A549 (cell line): ENCODE measurements at regions of chr5 and their contacts with region 1.

Region 1: GRCh38 chr5:177113566-177114424 is 19.8 kb upstream of the NSD1 start:
- DNase-seq: peak; percentile 74 to 94
- ATAC-seq: peak; percentile 75
- H3K4me3 ChIP-seq: no peak overlapping the region
- H3K27ac ChIP-seq: no peak overlapping the region
- H3K4me1 ChIP-seq: peaks cover 4% of the 10 kb centered on the region; the same call in 1 of the 3 replicates
- CTCF ChIP-seq: peak; percentile 97
- EP300 ChIP-seq: no peak
- POLR2A ChIP-seq: no peak
- RAD21 ChIP-seq: peak; percentile 95 to 99

Region 2: DNA sequence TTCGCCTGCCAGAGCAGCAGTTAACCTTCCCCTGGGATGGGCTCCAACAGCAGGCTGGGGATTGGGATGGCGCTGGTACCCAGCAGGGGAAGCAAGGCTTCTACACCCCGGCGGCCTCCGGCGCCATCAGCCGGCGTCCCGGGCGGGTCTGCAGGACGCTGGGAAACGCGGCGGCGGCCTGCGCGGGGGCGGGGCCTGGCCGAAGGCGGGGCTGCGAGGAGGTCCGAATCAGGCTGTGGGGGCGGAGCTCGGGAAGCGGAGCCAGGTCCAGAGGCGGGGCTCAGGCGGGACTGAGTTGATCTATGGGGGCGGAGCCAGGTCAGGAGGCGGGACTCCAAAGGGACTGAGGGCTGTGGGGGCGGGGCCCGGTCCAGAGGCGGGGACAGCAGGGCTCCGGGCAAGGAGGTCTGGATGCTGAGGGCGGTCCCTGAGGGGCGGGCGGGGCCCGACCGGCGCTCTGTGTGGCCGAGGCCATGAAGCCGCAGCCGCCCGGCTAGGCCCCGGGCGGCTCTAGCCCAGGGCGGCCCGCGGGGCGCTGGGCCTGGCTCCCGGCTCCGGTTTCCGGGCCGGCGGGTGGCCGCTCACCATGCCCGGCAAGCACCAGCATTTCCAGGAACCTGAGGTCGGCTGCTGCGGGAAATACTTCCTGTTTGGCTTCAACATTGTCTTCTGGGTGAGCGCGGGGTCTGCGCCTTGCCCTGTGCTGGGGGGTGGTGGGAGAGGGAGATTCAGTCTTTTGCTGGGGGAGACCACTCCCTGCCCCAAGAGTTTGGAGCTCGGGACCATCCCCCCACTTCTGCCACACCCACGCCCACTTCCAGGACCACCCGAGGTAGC is 466.5 kb before region 1 on chr5 and contains the start of gene TSPAN17:
- CTCF ChIA-PET with region 1: interaction called, 123 read pairs
- POLR2A ChIA-PET with region 1: no interaction called
- DNase-seq: peak; percentile 92 to 98
- ATAC-seq: peak; percentile 82 to 95
- H3K4me3 ChIP-seq: peak within 1 kb of the TSS; percentile 66
- H3K27ac ChIP-seq: peak within 1 kb of the TSS; percentile 86 to 94
- H3K4me1 ChIP-seq: peaks cover 14% of the 10 kb centered on the region
- CTCF ChIP-seq: peak; percentile 30; the same call in 2 of the 3 replicates
- EP300 ChIP-seq: no peak
- POLR2A ChIP-seq: peak; percentile 97
- RAD21 ChIP-seq: peak; percentile 32 to 66
- polyA plus RNA-seq, gene TSPAN17: 33.7 and 35.6 TPM in 2 replicates

Region 3: GRCh38 chr5:177094224-177095087 is 19.3 kb before region 1 on chr5:
- CTCF ChIA-PET with region 1: interaction called, 111 read pairs
- POLR2A ChIA-PET with region 1: interaction called, 3 read pairs
- DNase-seq: peak in 1 of 2 experiments; percentile 43
- ATAC-seq: peak; percentile 5 to 21; a peak in 2 of 6 replicates
- H3K4me3 ChIP-seq: no peak overlapping the region
- H3K27ac ChIP-seq: peak overlapping the region; percentile 39 to 65; a peak in 5 of 6 replicates
- H3K4me1 ChIP-seq: peaks cover 22% of the 10 kb centered on the region
- CTCF ChIP-seq: no peak
- EP300 ChIP-seq: no peak
- POLR2A ChIP-seq: no peak
- RAD21 ChIP-seq: no peak

Region 4: DNA sequence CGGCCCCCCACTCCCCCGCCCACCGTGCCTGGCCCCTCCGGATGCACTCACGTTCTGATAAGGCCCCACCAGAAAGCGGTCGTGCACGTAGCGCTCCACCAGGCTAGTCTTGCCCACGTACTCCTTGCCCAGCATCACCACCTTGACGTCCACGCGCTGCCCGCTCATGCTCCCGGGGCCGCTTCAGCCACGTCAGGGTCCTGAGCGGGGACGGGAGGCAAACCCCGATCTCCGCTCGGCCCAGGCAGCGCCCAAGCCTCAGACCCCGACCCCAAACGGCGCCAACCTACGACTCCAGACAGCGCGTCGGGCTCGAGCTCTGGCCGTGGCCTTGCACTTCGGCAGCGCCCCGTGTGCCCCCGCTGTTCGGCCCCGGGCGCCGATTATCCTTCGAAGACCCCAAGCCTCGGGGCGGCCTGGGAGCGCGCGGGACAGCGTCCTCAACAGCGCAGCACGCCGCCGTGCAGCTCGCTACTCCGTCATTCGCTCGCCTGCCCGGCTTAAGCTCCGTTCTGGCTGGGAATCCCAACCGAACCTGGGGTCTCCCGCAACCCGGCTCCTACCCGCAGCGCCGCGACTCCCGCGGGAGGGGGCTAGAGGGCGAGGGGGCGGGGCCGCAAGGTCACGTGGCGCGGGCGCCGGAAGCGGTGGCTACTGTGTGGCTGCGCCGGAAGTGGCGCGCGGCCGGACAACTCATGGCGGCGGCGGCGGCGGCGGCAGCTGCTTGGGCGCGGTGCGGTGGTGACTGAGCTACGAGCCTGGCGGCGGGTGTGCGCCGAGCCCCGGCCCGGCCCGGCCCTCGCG is 189.5 kb after region 1 on chr5 and contains the starts of genes PRELID1 and RAB24:
- CTCF ChIA-PET with region 1: interaction called, 31 read pairs
- POLR2A ChIA-PET with region 1: no interaction called
- DNase-seq: peak; percentile 77 to 84
- ATAC-seq: peak; percentile 55 to 78
- H3K4me3 ChIP-seq: peak within 1 kb of the TSS; percentile 68
- H3K27ac ChIP-seq: peak within 1 kb of the TSS; percentile 95 to 96
- H3K4me1 ChIP-seq: peaks cover 42% of the 10 kb centered on the region
- CTCF ChIP-seq: peak; percentile 14; the same call in 2 of the 3 replicates
- EP300 ChIP-seq: no peak
- POLR2A ChIP-seq: peak; percentile 60
- RAD21 ChIP-seq: no peak
- polyA plus RNA-seq, gene PRELID1: 218 and 227 TPM in 2 replicates
- polyA plus RNA-seq, gene RAB24: 31.2 and 31.3 TPM in 2 replicates

Region 5: DNA sequence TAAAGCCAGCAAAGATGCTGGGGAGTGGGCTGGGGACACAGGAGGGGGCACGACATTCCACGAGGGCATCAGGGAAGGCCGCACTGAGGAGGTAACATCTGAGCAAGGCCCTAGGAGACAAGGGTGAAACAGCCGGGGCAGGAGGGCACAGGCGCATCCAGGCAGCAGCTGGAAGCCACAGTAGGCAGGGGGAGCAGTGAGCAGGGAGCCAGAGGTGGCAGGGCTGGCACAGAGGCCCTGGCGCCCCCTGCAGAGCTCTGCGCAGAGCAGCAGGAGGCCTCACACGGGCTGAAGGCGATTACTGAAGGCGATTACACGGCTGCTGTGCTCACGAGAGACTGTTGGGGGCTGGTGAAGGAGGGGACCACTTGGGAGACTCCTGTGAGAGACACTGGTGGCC is 222.3 kb after region 1 on chr5:
- CTCF ChIA-PET with region 1: interaction called, 10 read pairs
- POLR2A ChIA-PET with region 1: no interaction called
- DNase-seq: peak; percentile 62 to 74
- ATAC-seq: peak; percentile 90 to 97
- H3K4me3 ChIP-seq: no peak overlapping the region
- H3K27ac ChIP-seq: no peak overlapping the region
- H3K4me1 ChIP-seq: 0 out of 3 replicates have a peak, but pooled peaks cover 10% of the 10 kb centered on the region
- CTCF ChIP-seq: peak; percentile 57
- EP300 ChIP-seq: no peak
- POLR2A ChIP-seq: no peak
- RAD21 ChIP-seq: peak; percentile 58 to 60

Region 6: DNA sequence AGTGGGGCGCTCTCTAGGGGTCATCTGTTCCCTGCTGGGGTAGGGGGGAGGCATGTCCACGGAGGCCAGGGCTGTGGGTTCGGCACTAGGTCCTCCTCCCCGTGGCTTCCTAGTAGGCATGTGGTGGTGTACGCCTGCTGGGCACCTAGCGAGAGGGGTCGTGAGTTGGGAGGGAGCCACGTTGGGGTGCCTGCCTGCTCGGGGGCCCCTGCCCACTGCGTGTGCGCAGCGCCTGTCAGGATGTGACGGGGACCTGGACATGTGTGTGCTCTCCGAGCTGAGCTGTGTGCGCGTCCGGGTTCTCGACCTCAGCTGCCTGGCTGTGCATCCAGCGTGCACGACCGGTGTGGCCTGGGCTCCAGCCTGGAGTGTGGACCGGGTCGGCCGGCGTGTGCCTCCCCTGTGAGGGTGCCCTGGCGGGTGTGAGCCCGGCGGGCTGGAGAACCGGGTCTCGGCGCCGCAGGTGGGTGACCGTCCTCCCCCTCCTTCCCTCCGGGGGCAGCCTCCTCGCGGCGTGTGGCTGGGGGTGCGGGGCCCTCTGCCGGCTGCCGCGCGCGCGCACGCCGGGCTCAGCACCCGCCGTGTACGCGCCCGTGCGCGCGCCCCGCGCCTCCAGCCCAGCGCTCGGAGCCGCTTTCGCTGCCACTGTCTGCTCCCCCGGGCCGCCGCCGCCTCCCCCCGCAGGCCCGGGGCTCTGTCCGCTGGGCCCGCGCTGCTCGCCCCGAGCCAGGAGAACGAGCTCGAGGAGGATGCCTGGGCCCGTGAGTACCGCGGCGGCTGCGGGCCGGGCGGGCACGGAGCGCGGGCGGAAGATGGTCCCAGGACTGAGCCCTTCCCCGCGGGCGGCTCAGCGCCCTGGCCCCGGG is 332.6 kb after region 1 on chr5 and contains the start of gene PRR7:
- CTCF ChIA-PET with region 1: interaction called, 12 read pairs
- POLR2A ChIA-PET with region 1: no interaction called
- DNase-seq: peak; percentile 73 to 85
- ATAC-seq: peak; percentile 39 to 43
- H3K4me3 ChIP-seq: peak within 1 kb of the TSS; percentile 86
- H3K27ac ChIP-seq: peak within 1 kb of the TSS; percentile 95 to 98
- H3K4me1 ChIP-seq: peaks cover 21% of the 10 kb centered on the region
- CTCF ChIP-seq: no peak
- EP300 ChIP-seq: no peak
- POLR2A ChIP-seq: peak; percentile 18; the same call in 1 of the 2 replicates
- RAD21 ChIP-seq: no peak
- polyA plus RNA-seq, gene PRR7: 1.8 and 2.2 TPM in 2 replicates